ENCODE measurements at regions of chr12 and their contacts with region 1.

Region 1: DNA sequence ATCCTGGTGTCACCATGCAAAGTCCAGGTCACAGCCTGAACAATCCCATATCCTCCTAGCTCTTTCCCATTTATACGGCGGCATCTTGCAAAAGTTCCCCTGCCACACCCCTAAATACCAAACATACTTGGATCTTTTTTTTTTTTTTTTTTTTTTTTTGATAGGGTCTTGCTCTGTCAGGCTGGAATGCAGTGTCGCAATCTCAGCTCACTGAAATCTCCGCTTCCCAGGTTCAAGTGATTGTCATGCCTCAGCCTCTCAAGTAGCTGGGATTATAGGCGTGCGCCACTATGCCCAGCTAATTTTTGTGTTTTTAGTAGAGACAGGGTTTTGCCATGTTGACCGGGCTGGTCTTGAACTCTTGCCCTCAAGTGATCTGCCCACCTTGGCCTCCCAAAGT is 451.3 kb downstream of the GLT1D1 start:
- DNase-seq: no peak
- H3K4me3 ChIP-seq: no peak overlapping the region
- H3K27ac ChIP-seq: no peak overlapping the region
- H3K4me1 ChIP-seq: no peaks in the 10 kb centered on the region
- H3K27me3 ChIP-seq: no peaks in the 10 kb centered on the region
- CTCF ChIP-seq: no peak
- POLR2A ChIP-seq: no peak

Region 2: DNA sequence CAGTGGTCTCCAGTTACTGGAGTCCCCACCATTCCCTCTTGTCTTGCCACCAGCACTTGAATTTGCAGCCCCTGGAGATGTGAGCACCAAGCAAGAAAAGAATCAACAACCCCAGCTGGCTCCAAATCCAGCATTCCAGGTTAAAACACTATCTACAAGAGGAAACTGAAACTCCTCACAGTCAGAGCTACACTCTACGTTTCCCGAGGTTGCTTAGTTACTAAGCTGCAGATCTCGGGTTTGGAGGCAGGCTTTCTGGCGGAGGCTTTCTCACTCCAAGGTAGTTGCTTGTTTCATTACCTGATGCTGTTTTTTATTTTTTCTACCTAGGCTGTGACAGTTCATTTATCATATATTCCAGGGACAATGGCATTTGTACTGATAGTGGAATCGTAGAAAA is 203.1 kb before region 1 on chr12:
- intact Hi-C with region 1: no loop called
- DNase-seq: no peak
- H3K4me3 ChIP-seq: no peak overlapping the region
- H3K27ac ChIP-seq: no peak overlapping the region
- H3K4me1 ChIP-seq: no peaks in the 10 kb centered on the region
- H3K27me3 ChIP-seq: no peaks in the 10 kb centered on the region
- CTCF ChIP-seq: no peak
- POLR2A ChIP-seq: no peak

Region 3: GRCh38 chr12:129257524-129257923 is 47.0 kb before region 1 on chr12:
- intact Hi-C with region 1: no loop called
- DNase-seq: no peak
- H3K4me3 ChIP-seq: no peak overlapping the region
- H3K27ac ChIP-seq: no peak overlapping the region
- H3K4me1 ChIP-seq: no peaks in the 10 kb centered on the region
- H3K27me3 ChIP-seq: no peaks in the 10 kb centered on the region
- CTCF ChIP-seq: no peak
- POLR2A ChIP-seq: no peak

Region 4: GRCh38 chr12:129681151-129681550 is 376.6 kb after region 1 on chr12:
- intact Hi-C with region 1: loop called (anchors 5 kb)
- DNase-seq: no peak
- H3K4me3 ChIP-seq: no peak overlapping the region
- H3K27ac ChIP-seq: no peak overlapping the region
- H3K4me1 ChIP-seq: no peaks in the 10 kb centered on the region
- H3K27me3 ChIP-seq: no peaks in the 10 kb centered on the region
- CTCF ChIP-seq: no peak
- POLR2A ChIP-seq: no peak

Measured in vagina (tissue), 2 donors.